Naive thymus-derived CD4-positive, alpha-beta T cell (primary cell): ENCODE measurements at regions of chr4 and their contacts with region 1.

Region 1: GRCh38 chr4:73019462-73020047 is 50.0 kb downstream of the COX18 start:
- DNase-seq: peak in 6 of 9 donors; percentile 2 to 33 (median 20)
- ATAC-seq: no peak
- H3K4me3 ChIP-seq: no peak overlapping the region
- H3K4me3 Mint-ChIP-seq: no peak overlapping the region
- H3K27ac ChIP-seq: no peak overlapping the region
- H3K27ac Mint-ChIP-seq: no peak overlapping the region
- H3K4me1 ChIP-seq: no peaks in the 10 kb centered on the region
- H3K4me1 Mint-ChIP-seq: peaks cover 0 to 1% (median 0%) of the 10 kb centered on the region in 7 donors
- H3K27me3 ChIP-seq: no peaks in the 10 kb centered on the region
- H3K27me3 Mint-ChIP-seq: peaks cover 0 to 11% (median 8%) of the 10 kb centered on the region in 5 donors

Region 2: DNA sequence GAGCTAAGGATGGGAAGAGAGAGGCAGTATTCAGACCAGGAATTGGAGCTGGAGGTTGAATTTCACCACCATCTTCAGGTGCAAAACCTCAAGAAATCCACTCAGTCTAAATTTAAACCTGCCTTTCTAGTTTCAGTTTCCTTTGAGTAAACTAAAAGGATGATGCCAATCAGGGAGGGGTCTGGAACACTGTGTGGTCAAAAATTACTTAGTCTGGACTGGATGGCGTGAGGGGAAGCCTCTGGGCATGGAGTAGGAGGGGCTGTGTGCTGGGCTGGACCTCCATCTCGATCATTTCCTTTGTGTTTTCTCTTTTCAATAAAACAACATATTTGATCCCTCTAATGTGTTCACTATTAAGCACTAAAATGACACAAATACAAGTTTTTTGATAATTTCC is 1355.8 kb before region 1 on chr4:
- CTCF ChIA-PET with region 1: no interaction called
- POLR2A ChIA-PET with region 1: no interaction called
- intact Hi-C with region 1: no loop called
- DNase-seq: no peak
- ATAC-seq: no peak
- H3K4me3 ChIP-seq: no peak overlapping the region
- H3K4me3 Mint-ChIP-seq: no peak overlapping the region
- H3K27ac ChIP-seq: no peak overlapping the region
- H3K27ac Mint-ChIP-seq: no peak overlapping the region
- H3K4me1 ChIP-seq: no peaks in the 10 kb centered on the region
- H3K4me1 Mint-ChIP-seq: peaks cover 0 to 3% (median 0%) of the 10 kb centered on the region in 7 donors
- H3K27me3 ChIP-seq: no peaks in the 10 kb centered on the region
- H3K27me3 Mint-ChIP-seq: peaks cover 0 to 28% (median 24%) of the 10 kb centered on the region in 5 donors

Region 3: DNA sequence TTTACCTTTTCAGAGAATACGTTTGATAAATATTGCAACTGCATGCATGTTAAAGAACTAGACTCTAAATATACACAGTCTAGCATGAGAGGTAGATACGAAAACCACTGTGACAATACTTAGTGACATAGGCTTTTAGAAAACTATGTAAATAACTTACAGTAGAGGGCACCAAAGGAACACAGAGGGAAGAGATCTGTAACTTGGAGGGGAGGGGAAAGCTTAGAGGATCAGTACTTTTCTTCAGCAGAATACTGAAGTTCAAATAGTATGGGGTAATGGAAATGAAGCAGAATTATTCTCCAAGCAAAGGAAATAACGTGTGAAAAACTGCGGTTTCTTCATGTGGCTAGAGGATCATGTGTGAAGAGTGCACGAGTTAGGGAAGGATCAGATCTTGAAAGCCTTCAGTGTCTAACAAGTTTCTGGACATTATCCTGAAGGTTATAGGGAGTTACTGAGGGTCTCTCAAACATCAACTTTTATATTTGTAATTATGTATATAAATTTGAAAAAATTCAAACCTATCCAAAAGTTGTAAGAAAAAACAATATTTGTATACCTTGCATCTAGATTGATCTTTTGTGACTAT is 723.5 kb before region 1 on chr4:
- CTCF ChIA-PET with region 1: no interaction called
- POLR2A ChIA-PET with region 1: no interaction called
- intact Hi-C with region 1: loop called in 1 of 2 experiments (anchors 10 kb)
- DNase-seq: peak in 2 of 9 donors; percentile 2 to 19
- ATAC-seq: no peak
- H3K4me3 ChIP-seq: no peak overlapping the region
- H3K4me3 Mint-ChIP-seq: no peak overlapping the region
- H3K27ac ChIP-seq: no peak overlapping the region
- H3K27ac Mint-ChIP-seq: no peak overlapping the region
- H3K4me1 ChIP-seq: no peaks in the 10 kb centered on the region
- H3K4me1 Mint-ChIP-seq: peaks cover 0 to 3% (median 0%) of the 10 kb centered on the region in 7 donors
- H3K27me3 ChIP-seq: no peaks in the 10 kb centered on the region
- H3K27me3 Mint-ChIP-seq: peaks cover 3 to 21% (median 9%) of the 10 kb centered on the region in 5 donors

Region 4: GRCh38 chr4:72701987-72702819 is 317.4 kb before region 1 on chr4:
- CTCF ChIA-PET with region 1: no interaction called
- POLR2A ChIA-PET with region 1: no interaction called
- intact Hi-C with region 1: loop called (anchors 1 kb)
- DNase-seq: peak in 6 of 9 donors; percentile 10 to 32 (median 22)
- ATAC-seq: peak; percentile 56
- H3K4me3 ChIP-seq: no peak overlapping the region
- H3K4me3 Mint-ChIP-seq: peak overlapping the region in 9 of 10 donors; percentile 42 to 85 (median 83)
- H3K27ac ChIP-seq: no peak overlapping the region
- H3K27ac Mint-ChIP-seq: peak overlapping the region in 2 of 9 donors; percentile 3 to 71
- H3K4me1 ChIP-seq: no peaks in the 10 kb centered on the region
- H3K4me1 Mint-ChIP-seq: peaks cover 0 to 6% (median 0%) of the 10 kb centered on the region in 7 donors
- H3K27me3 ChIP-seq: no peaks in the 10 kb centered on the region
- H3K27me3 Mint-ChIP-seq: peaks cover 0 to 14% (median 6%) of the 10 kb centered on the region in 5 donors

Region 5: DNA sequence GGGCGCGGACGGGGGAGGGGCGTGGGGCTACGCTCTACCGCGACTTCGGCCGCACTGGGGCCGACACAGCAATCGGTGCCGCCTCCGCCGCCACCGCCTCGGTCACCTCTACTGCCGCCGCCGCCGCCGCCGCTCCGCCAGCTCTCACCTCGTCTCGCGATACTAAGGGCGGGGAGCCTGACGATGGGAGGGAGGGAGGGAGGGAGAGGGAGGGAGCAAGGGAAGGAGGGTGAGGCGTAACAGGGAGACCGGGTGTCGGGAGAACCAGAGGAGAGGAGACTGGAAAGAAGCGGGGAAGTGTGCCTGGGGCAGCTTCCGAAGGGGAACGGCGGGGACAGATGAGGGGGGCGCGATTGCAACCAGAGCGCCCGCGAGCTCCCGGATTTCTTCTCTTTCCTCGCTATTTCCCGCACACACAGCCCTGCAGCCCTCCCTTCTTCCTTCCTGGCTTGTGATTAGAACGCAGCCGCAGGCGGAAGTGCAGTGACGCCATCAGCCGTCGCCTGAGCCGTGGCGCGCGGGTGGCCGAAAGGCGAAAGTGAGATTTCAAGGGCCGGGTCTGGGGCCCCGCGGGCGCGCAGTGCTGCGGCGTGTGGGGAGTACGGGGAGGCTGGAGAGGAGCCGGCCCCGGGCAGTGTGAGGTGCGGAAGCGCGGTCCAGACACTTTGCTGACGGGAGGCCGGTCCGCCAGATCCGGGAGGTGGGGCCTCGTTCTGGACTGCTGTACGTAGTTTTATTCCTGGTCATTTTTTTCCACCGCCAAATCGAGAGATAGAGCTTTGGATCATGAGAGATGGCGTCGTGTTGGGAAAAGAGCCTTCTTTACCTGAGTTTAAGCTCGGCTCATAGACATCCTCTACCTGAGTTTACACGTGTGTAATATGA is 239.4 kb after region 1 on chr4 and contains the start of gene ANKRD17:
- CTCF ChIA-PET with region 1: no interaction called
- POLR2A ChIA-PET with region 1: no interaction called
- intact Hi-C with region 1: no loop called
- DNase-seq: peak; percentile 82 to 92 (median 89)
- ATAC-seq: peak; percentile 87
- H3K4me3 ChIP-seq: peak within 1 kb of the TSS; percentile 81
- H3K4me3 Mint-ChIP-seq: peak within 1 kb of the TSS; percentile 98 to 100 (median 99)
- H3K27ac ChIP-seq: peak within 1 kb of the TSS; percentile 98
- H3K27ac Mint-ChIP-seq: peak within 1 kb of the TSS; percentile 99 to 100 (median 100)
- H3K4me1 ChIP-seq: peaks cover 6 to 44% of the 10 kb centered on the region in 2 donors
- H3K4me1 Mint-ChIP-seq: peaks cover 37 to 90% (median 65%) of the 10 kb centered on the region in 7 donors
- H3K27me3 ChIP-seq: no peaks in the 10 kb centered on the region
- H3K27me3 Mint-ChIP-seq: no peaks in the 10 kb centered on the region
- total RNA-seq, gene ANKRD17: 54.4 to 67.5 (median 59.6) TPM